Body of pancreas (tissue), 4 donors: ENCODE measurements at regions of chr10 and their contacts with region 1.

Region 1: GRCh38 chr10:75401569-75402485 is at the start of gene ZNF503:
- DNase-seq: peak; percentile 97 to 99 (median 98)
- ATAC-seq: peak; percentile 75
- H3K4me3 ChIP-seq: peak within 1 kb of the TSS; percentile 63 to 97
- H3K27ac ChIP-seq: peak within 1 kb of the TSS; percentile 93 to 100 (median 98)
- H3K4me1 ChIP-seq: peaks cover 24% of the 10 kb centered on the region
- H3K27me3 ChIP-seq: no peaks in the 10 kb centered on the region
- CTCF ChIP-seq: peak in 4 of 7 experiments; percentile 59 to 70 (median 64)
- POLR2A ChIP-seq: peak; percentile 98 to 99 (median 98)
- total RNA-seq, gene ZNF503: 20.8 to 38.6 TPM

Region 2: GRCh38 chr10:75294866-75295701 is 106.7 kb before region 1 on chr10:
- intact Hi-C with region 1: no loop called
- DNase-seq: peak; percentile 95 to 98 (median 96)
- ATAC-seq: peak; percentile 87
- H3K4me3 ChIP-seq: no peak overlapping the region
- H3K27ac ChIP-seq: peak overlapping the region; percentile 99 to 100 (median 99)
- H3K4me1 ChIP-seq: peaks cover 47% of the 10 kb centered on the region
- H3K27me3 ChIP-seq: no peaks in the 10 kb centered on the region
- CTCF ChIP-seq: peak in 6 of 7 experiments; percentile 11 to 55 (median 44)
- POLR2A ChIP-seq: peak; percentile 83 to 89 (median 85)

Region 3: GRCh38 chr10:76036111-76036940 is 634.5 kb after region 1 on chr10:
- intact Hi-C with region 1: loop called (anchors 10 kb)
- DNase-seq: peak; percentile 70 to 82 (median 77)
- ATAC-seq: peak; percentile 72
- H3K4me3 ChIP-seq: no peak overlapping the region
- H3K27ac ChIP-seq: peak overlapping the region in 3 of 4 donors; percentile 16 to 46 (median 34)
- H3K4me1 ChIP-seq: peaks cover 29% of the 10 kb centered on the region
- H3K27me3 ChIP-seq: no peaks in the 10 kb centered on the region
- CTCF ChIP-seq: peak; percentile 88 to 95 (median 90)
- POLR2A ChIP-seq: no peak